MCF 10A (cell line): ENCODE measurements at regions of chr1 and their contacts with region 1.

Region 1: DNA sequence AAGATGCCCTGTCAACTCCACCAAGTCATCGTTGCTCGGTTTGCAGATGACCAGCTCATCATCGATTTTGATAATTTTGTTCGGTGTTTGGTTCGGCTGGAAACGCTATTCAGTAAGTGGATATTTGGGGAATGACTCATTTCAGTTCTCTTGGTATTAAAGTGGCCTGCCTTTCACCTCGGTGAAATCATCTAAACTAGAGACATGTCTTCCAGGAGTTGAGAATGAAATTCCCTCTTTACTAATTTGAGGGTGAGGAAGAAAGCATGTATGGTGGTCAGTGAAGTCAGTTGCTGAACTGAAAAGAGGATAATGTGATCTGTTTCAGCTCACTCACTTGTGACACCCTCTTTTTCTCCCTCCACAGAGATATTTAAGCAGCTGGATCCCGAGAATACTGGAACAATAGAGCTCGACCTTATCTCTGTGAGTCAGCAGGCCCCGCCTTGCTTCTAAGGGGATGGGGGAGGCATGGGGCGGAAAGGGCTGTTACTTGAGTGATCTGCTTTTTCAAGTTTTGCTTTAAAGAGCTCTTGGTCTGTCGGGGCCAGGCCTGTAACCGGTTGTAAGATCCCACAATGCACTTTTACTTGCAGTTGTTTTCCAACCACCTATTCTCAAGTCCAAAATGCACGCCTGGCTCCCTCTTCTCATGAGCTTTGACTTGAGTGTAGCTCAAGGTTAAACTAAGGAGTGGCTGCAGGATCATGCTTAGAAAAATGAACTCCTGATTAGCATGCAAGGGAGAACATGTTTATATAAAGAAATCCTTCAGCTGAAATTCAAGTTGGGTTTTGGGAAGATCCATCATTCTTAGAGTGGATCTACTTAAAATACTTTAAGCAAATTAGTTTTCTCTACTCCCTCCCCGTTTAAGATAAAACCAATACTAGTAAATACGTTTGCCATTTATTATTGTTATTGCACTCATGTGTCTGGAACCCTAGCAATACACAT is 59.8 kb downstream of the CAPN2 start:
- DNase-seq: peak; percentile 82
- H3K4me3 Mint-ChIP-seq: peak overlapping the region; percentile 52
- H3K27ac Mint-ChIP-seq: peak overlapping the region; percentile 92
- H3K4me1 Mint-ChIP-seq: peaks cover 69% of the 10 kb centered on the region
- H3K27me3 Mint-ChIP-seq: no peaks in the 10 kb centered on the region
- CTCF ChIP-seq: no peak

Region 2: DNA sequence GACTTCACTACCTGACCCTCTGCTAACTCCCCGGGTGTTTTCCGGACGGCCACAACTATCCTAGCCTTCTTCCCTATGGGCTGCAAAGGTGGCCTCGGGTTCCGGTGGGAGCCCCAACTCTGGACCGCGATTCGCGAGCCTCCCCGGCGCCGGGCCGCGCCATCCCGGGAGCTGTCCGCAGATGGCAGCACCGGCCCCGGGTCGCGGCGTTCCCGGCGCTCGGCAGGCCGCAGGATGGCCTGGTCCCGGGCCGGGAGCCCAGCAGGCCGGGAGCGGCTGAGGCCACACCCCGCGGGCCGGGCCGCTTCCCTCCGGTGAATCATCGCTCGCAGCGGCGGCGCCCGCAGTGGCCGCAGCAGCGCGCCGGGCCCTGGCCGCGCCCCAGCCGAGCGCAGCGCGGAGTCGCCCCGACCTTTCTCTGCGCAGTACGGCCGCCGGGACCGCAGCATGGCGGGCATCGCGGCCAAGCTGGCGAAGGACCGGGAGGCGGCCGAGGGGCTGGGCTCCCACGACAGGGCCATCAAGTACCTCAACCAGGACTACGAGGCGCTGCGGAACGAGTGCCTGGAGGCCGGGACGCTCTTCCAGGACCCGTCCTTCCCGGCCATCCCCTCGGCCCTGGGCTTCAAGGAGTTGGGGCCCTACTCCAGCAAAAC is 59.8 kb before region 1 on chr1 and contains the start of gene CAPN2:
- CTCF ChIA-PET with region 1: interaction called, 16 read pairs
- POLR2A ChIA-PET with region 1: interaction called, 71 read pairs
- intact Hi-C with region 1: loop called (anchors 1 kb)
- DNase-seq: peak; percentile 94
- H3K4me3 Mint-ChIP-seq: peak within 1 kb of the TSS; percentile 77
- H3K27ac Mint-ChIP-seq: peak within 1 kb of the TSS; percentile 88
- H3K4me1 Mint-ChIP-seq: peaks cover 61% of the 10 kb centered on the region
- H3K27me3 Mint-ChIP-seq: no peaks in the 10 kb centered on the region
- CTCF ChIP-seq: peak; percentile 98
- total RNA-seq, gene CAPN2: 513 and 622 TPM in 2 replicates

Region 3: GRCh38 chr1:223726380-223727001 is 45.6 kb before region 1 on chr1:
- CTCF ChIA-PET with region 1: interaction called, 5 read pairs
- POLR2A ChIA-PET with region 1: interaction called, 17 read pairs
- intact Hi-C with region 1: no loop called
- DNase-seq: peak; percentile 100
- H3K4me3 Mint-ChIP-seq: peak overlapping the region; percentile 32
- H3K27ac Mint-ChIP-seq: peak overlapping the region; percentile 90
- H3K4me1 Mint-ChIP-seq: peaks cover 66% of the 10 kb centered on the region
- H3K27me3 Mint-ChIP-seq: no peaks in the 10 kb centered on the region
- CTCF ChIP-seq: no peak

Region 4: DNA sequence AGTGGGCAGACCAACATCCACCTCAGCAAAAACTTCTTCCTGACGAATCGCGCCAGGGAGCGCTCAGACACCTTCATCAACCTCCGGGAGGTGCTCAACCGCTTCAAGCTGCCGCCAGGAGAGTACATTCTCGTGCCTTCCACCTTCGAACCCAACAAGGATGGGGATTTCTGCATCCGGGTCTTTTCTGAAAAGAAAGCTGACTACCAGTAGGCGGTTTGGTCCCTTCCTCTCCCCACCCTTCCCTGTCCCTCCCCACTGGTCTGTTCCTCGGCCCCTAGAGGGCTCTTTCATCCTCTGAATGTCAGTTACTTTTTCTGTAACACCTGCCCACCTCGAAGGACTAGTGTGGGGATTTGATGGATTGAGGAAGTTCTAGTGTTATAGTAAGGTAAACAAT is 12.8 kb before region 1 on chr1:
- CTCF ChIA-PET with region 1: interaction called, 12 read pairs
- POLR2A ChIA-PET with region 1: interaction called, 26 read pairs
- intact Hi-C with region 1: no loop called
- DNase-seq: no peak
- H3K4me3 Mint-ChIP-seq: no peak overlapping the region
- H3K27ac Mint-ChIP-seq: peak overlapping the region; percentile 13
- H3K4me1 Mint-ChIP-seq: no peaks in the 10 kb centered on the region
- H3K27me3 Mint-ChIP-seq: no peaks in the 10 kb centered on the region
- CTCF ChIP-seq: no peak